ENCODE measurements at regions of chr4 and their contacts with region 1.

Region 1: GRCh38 chr4:46937493-46937892 is 28.4 kb upstream of the COX7B2 start:
- DNase-seq: peak; percentile 22
- H3K4me3 Mint-ChIP-seq: no peak overlapping the region
- H3K27ac Mint-ChIP-seq: no peak overlapping the region
- H3K4me1 Mint-ChIP-seq: no peaks in the 10 kb centered on the region
- H3K27me3 Mint-ChIP-seq: peaks cover 77% of the 10 kb centered on the region
- CTCF ChIP-seq: no peak

Region 2: GRCh38 chr4:47002593-47002992 is 65.1 kb after region 1 on chr4:
- CTCF ChIA-PET with region 1: interaction called, 5 read pairs
- POLR2A ChIA-PET with region 1: no interaction called
- intact Hi-C with region 1: loop called (anchors 2 kb)
- DNase-seq: peak; percentile 25
- H3K4me3 Mint-ChIP-seq: no peak overlapping the region
- H3K27ac Mint-ChIP-seq: no peak overlapping the region
- H3K4me1 Mint-ChIP-seq: no peaks in the 10 kb centered on the region
- H3K27me3 Mint-ChIP-seq: no peaks in the 10 kb centered on the region
- CTCF ChIP-seq: peak; percentile 19